Naive thymus-derived CD4-positive, alpha-beta T cell (primary cell): ENCODE measurements at regions of chr1 and their contacts with region 1.

Region 1: GRCh38 chr1:89524369-89525168 is at the start of gene LRRC8B:
- DNase-seq: peak; percentile 80 to 91 (median 86)
- ATAC-seq: peak; percentile 94
- H3K4me3 ChIP-seq: peak within 1 kb of the TSS; percentile 93
- H3K4me3 Mint-ChIP-seq: peak within 1 kb of the TSS in 1 of 10 donors; percentile 76
- H3K27ac ChIP-seq: peak within 1 kb of the TSS; percentile 92
- H3K27ac Mint-ChIP-seq: peak within 1 kb of the TSS in 8 of 9 donors; percentile 89 to 97 (median 94)
- H3K4me1 ChIP-seq: peaks cover 7 to 34% of the 10 kb centered on the region in 2 donors
- H3K4me1 Mint-ChIP-seq: peaks cover 11 to 31% (median 21%) of the 10 kb centered on the region in 7 donors
- H3K27me3 ChIP-seq: no peaks in the 10 kb centered on the region
- H3K27me3 Mint-ChIP-seq: no peaks in the 10 kb centered on the region
- total RNA-seq, gene LRRC8B: 8.8 to 23.0 (median 17.1) TPM

Region 2: GRCh38 chr1:88891318-88891950 is 633.1 kb before region 1 on chr1 and contains the start of gene GTF2B:
- CTCF ChIA-PET with region 1: no interaction called
- POLR2A ChIA-PET with region 1: no interaction called
- intact Hi-C with region 1: loop called in 1 of 2 experiments (anchors 1 kb)
- DNase-seq: peak; percentile 86 to 96 (median 94)
- ATAC-seq: peak; percentile 97
- H3K4me3 ChIP-seq: peak within 1 kb of the TSS; percentile 86
- H3K4me3 Mint-ChIP-seq: peak within 1 kb of the TSS; percentile 87 to 99 (median 95)
- H3K27ac ChIP-seq: peak within 1 kb of the TSS; percentile 91
- H3K27ac Mint-ChIP-seq: peak within 1 kb of the TSS; percentile 93 to 98 (median 97)
- H3K4me1 ChIP-seq: peaks cover 26 to 27% of the 10 kb centered on the region in 2 donors
- H3K4me1 Mint-ChIP-seq: peaks cover 23 to 59% (median 48%) of the 10 kb centered on the region in 7 donors
- H3K27me3 ChIP-seq: no peaks in the 10 kb centered on the region
- H3K27me3 Mint-ChIP-seq: peaks cover 0 to 2% (median 0%) of the 10 kb centered on the region in 5 donors
- total RNA-seq, gene GTF2B: 41.3 to 53.6 (median 47.3) TPM

Region 3: DNA sequence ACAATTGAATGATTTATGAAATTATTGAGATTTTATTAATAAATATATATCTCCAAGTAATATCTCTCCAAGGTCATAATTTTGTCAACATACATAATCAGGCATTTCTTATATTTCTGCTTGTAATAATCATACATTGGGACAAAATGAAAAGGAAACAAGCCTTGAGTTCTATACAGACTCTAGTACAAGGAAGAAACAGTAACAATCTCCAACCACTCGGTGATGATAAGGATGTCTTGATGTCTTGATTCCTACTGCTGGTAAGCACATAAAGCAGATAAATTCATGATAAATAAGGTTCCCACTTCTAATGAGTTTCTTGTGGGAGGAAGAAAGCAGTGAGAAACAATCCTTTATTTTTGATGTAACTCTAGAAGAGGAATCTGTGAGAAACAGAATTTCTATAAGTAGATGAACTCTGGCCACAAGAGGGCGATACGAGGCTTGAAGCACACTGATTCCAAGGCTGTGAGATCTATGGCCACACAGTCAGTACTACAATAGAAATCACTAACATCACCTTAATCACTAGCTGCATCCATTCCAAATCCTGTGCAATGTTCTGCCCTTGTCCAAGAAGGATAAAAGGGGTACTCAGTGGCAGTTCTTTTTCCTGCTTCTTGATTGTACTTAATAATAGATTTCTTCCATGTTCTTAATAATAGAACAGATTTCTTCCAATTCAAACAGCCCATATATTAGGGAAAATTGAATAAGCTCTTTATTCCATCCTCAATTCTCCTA is 41.4 kb before region 1 on chr1:
- CTCF ChIA-PET with region 1: interaction called, 10 read pairs
- POLR2A ChIA-PET with region 1: no interaction called
- intact Hi-C with region 1: loop called (anchors 1 to 2 kb)
- DNase-seq: peak; percentile 37 to 77 (median 67)
- ATAC-seq: peak; percentile 97
- H3K4me3 ChIP-seq: no peak overlapping the region
- H3K4me3 Mint-ChIP-seq: no peak overlapping the region
- H3K27ac ChIP-seq: no peak overlapping the region
- H3K27ac Mint-ChIP-seq: no peak overlapping the region
- H3K4me1 ChIP-seq: no peaks in the 10 kb centered on the region
- H3K4me1 Mint-ChIP-seq: peaks cover 0 to 18% (median 9%) of the 10 kb centered on the region in 7 donors
- H3K27me3 ChIP-seq: no peaks in the 10 kb centered on the region
- H3K27me3 Mint-ChIP-seq: peaks cover 0 to 5% (median 0%) of the 10 kb centered on the region in 5 donors

Region 4: GRCh38 chr1:89552471-89553081 is 28.0 kb after region 1 on chr1:
- CTCF ChIA-PET with region 1: no interaction called
- POLR2A ChIA-PET with region 1: no interaction called
- intact Hi-C with region 1: loop called in 1 of 2 experiments (anchors 5 kb)
- DNase-seq: peak in 3 of 9 donors; percentile 4 to 13 (median 12)
- ATAC-seq: peak; percentile 54
- H3K4me3 ChIP-seq: peak overlapping the region; percentile 40
- H3K4me3 Mint-ChIP-seq: peak overlapping the region in 9 of 10 donors; percentile 18 to 78 (median 56)
- H3K27ac ChIP-seq: no peak overlapping the region
- H3K27ac Mint-ChIP-seq: peak overlapping the region; percentile 7 to 77 (median 62)
- H3K4me1 ChIP-seq: peaks cover 0 to 12% of the 10 kb centered on the region in 2 donors
- H3K4me1 Mint-ChIP-seq: peaks cover 44 to 95% (median 76%) of the 10 kb centered on the region in 7 donors
- H3K27me3 ChIP-seq: no peaks in the 10 kb centered on the region
- H3K27me3 Mint-ChIP-seq: no peaks in the 10 kb centered on the region

Region 5: DNA sequence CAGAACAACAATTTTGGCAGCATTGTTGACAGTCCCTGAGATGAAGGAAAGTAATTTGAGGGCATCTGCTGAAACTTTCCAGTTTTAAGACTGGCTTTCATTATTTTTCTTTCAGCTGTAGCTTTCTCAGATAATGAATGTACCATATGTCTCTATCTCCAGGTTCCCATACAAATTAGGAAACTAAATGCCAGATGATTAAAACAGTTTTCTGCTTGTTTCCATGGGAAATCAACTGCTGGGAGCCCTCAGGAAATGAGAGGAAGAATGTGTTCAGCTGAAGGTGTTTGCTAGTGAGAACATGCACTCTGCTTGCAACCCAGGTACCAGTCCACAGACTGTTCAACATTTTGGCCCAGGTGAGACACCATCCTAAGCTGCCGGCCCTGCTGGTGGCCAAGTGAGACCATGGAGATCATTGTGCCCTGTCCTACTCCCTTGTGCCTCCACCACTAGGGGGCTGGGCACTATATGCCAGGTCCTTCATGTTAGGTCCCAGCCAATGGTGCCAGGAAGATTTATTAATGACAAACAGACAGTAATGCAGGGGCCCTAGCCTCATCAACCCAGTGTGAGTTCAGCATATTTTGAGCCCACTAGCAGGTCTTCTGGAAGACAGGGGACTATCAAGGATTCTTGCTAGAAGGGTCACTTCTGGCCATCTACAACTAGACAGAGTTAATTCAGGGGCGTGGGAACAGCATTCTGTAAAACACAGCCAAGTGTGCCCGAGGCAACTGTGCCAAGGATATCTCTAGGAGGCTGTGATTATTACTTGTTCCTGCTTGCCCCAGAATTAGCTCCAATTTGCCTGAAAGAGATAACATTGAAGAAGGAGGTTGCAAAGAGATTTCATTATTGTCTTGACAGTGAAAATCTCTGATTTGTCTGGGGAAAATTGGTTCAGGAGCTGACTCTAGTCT is 91.4 kb after region 1 on chr1:
- CTCF ChIA-PET with region 1: interaction called, 9 read pairs
- POLR2A ChIA-PET with region 1: interaction called, 75 read pairs
- intact Hi-C with region 1: no loop called
- DNase-seq: no peak
- ATAC-seq: peak; percentile 54
- H3K4me3 ChIP-seq: no peak overlapping the region
- H3K4me3 Mint-ChIP-seq: peak overlapping the region in 2 of 10 donors; percentile 23 to 24
- H3K27ac ChIP-seq: no peak overlapping the region
- H3K27ac Mint-ChIP-seq: peak overlapping the region in 8 of 9 donors; percentile 15 to 86 (median 74)
- H3K4me1 ChIP-seq: peaks cover 30 to 42% of the 10 kb centered on the region in 2 donors
- H3K4me1 Mint-ChIP-seq: peaks cover 38 to 95% (median 84%) of the 10 kb centered on the region in 7 donors
- H3K27me3 ChIP-seq: no peaks in the 10 kb centered on the region
- H3K27me3 Mint-ChIP-seq: no peaks in the 10 kb centered on the region

Region 6: DNA sequence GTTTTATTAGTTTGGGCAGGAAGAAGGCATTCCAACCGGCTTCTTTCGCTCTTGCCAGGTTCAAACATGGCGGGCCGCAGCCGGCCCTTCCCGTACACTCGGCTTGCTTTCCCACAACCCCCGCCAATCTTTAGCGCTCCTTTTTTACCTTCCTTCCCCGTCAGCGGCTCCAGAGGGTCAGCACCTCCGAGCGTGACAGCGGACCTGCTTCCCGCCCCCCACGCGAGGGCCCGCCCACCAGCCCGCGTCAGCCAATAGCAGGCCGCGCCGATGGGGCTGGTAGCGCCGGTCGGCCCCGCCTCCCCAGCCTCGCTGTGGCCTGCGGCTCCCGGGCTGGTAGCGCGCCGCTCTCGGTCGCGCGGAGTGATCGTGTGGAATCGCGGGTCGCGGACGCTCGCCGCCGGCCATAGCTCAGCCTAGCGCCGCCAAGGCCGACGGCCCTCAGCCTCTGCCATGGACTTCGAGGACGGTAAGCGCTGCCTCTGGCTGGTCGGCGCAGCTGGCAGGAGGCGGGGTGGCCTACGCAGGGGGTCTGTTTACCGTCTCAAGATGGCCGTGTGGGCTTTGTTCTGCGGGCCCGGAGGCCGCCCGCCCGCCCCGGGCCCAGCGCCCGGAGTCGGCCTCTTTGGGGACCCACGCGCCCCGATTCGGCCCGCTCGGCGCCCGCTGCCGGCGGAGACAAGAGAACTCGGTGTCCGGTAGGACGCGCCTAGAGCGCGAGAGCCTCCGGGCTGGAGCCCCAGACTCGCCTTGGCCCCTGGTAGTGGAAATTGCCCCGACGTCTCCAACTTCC is 470.4 kb after region 1 on chr1 and contains the start of gene ZNF326:
- CTCF ChIA-PET with region 1: no interaction called
- POLR2A ChIA-PET with region 1: no interaction called
- intact Hi-C with region 1: loop called (anchors 1 kb)
- DNase-seq: peak; percentile 88 to 99 (median 93)
- ATAC-seq: peak; percentile 98
- H3K4me3 ChIP-seq: peak within 1 kb of the TSS; percentile 86
- H3K4me3 Mint-ChIP-seq: peak within 1 kb of the TSS; percentile 91 to 100 (median 99)
- H3K27ac ChIP-seq: peak within 1 kb of the TSS; percentile 85
- H3K27ac Mint-ChIP-seq: peak within 1 kb of the TSS; percentile 90 to 98 (median 96)
- H3K4me1 ChIP-seq: peaks cover 8 to 14% of the 10 kb centered on the region in 2 donors
- H3K4me1 Mint-ChIP-seq: peaks cover 28 to 47% (median 43%) of the 10 kb centered on the region in 7 donors
- H3K27me3 ChIP-seq: no peaks in the 10 kb centered on the region
- H3K27me3 Mint-ChIP-seq: peaks cover 0 to 7% (median 4%) of the 10 kb centered on the region in 5 donors
- total RNA-seq, gene ZNF326: 17.3 to 52.5 (median 23.5) TPM